Psoas muscle (tissue), 8 donors: ENCODE measurements at regions of chr17 and their contacts with region 1.

Region 1: DNA sequence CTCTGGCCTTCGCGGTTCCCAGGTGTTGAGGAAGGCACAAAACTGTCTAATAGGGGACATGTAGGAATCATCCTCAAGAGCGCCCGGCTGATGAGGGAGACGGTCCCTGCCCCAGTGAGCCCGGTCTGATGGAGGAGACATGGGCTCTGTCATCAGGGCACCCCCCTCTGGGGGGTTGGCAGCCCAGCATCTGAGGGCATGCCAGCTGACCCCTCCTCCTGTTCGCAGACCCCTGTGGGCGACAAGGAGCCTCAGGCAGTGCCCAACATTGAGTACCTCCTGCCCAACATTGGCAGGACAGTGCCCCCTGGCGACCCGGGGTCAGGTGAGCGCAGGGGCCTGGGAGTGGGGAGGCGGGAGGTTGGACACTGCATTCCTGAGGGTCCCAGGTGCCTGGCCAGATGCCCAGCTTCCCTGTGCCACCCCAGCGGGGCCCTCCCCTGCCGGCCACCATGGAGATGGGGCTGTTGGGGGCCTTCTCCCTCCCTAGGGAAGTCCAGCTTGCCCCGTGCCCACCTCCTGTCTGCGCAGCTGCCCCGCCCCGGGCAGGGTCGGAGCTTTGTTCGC is 70.0 kb downstream of the ARHGAP23 start:
- DNase-seq: peak in 1 of 2 donors; percentile 50
- ATAC-seq: no peak
- H3K4me3 ChIP-seq: no peak overlapping the region
- H3K27ac ChIP-seq: no peak overlapping the region
- H3K4me1 ChIP-seq: no peaks in the 10 kb centered on the region
- H3K27me3 ChIP-seq: no peaks in the 10 kb centered on the region
- CTCF ChIP-seq: no peak

Region 2: DNA sequence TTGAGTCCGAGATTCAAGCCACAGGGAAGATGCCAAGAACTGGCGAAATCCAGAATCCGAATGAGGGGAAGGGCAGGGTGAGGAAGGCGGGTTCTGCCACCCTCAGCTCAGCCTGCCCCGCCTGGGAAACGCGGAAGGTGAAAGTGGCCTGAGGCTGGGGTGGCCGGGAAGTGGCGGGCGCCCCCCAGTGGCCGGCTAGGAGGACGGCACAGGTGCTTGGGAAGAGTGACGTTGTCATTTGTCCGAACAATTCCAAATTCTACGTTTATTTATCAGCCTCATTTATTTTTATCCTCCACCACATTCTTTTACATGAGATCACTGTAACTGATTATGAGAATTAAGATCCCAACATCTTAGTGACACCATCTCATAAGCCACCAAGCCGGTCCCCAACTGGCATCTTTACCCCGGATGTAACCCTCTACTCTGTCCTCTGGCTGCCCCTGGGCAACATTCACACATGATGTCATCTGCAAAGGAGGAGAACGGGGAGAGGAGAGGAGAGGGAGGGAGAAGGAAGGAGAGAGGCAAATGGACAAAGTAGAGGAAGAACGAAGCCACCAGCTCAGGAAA is 86.2 kb after region 1 on chr17:
- intact Hi-C with region 1: loop called in 1 of 2 experiments (anchors 1 kb)
- DNase-seq: peak; percentile 75
- ATAC-seq: peak; percentile 85 to 97 (median 90)
- H3K4me3 ChIP-seq: no peak overlapping the region
- H3K27ac ChIP-seq: no peak overlapping the region
- H3K4me1 ChIP-seq: peaks cover 4% of the 10 kb centered on the region
- H3K27me3 ChIP-seq: peaks cover 0 to 51% (median 5%) of the 10 kb centered on the region in 3 donors
- CTCF ChIP-seq: peak; percentile 88

Region 3: DNA sequence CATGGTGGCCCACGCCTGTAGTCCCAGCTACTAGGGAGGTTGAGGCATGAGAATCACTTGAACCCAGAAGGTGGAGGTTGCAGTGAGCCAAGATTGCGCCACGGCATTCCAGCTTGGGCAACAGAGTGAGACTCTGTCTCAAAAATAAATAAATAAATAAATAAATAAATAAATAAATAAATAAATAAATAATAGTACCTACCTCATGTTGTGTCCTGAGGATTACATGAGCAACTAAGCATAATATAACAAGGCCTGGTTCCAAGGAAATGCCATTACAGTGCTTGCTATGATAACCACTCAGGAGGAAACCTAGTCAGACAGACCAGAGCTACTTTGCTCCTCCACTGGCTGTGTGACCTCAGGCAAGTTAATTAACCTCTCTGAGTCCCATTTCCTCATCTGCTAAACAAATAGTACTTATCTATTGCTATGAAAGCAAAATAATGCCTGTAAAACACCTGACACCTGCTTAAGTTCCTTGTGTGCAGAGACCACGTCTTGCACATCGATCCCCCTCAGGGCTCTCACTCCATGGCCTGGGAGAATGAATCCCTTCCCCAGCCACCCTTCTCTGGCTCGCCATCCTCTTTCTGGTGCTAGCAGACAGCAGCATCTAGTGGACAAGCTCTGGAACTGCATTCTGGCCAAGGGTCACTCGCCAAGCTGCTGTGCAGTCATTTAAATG is 169.0 kb after region 1 on chr17:
- intact Hi-C with region 1: loop called in 1 of 2 experiments (anchors 2 kb)
- DNase-seq: peak; percentile 52 to 70
- ATAC-seq: peak; percentile 78 to 91 (median 82)
- H3K4me3 ChIP-seq: no peak overlapping the region
- H3K27ac ChIP-seq: no peak overlapping the region
- H3K4me1 ChIP-seq: no peaks in the 10 kb centered on the region
- H3K27me3 ChIP-seq: peaks cover 0 to 47% (median 5%) of the 10 kb centered on the region in 3 donors
- CTCF ChIP-seq: peak; percentile 98